ENCODE measurements at regions of chr13 and their contacts with region 1.

Region 1: DNA sequence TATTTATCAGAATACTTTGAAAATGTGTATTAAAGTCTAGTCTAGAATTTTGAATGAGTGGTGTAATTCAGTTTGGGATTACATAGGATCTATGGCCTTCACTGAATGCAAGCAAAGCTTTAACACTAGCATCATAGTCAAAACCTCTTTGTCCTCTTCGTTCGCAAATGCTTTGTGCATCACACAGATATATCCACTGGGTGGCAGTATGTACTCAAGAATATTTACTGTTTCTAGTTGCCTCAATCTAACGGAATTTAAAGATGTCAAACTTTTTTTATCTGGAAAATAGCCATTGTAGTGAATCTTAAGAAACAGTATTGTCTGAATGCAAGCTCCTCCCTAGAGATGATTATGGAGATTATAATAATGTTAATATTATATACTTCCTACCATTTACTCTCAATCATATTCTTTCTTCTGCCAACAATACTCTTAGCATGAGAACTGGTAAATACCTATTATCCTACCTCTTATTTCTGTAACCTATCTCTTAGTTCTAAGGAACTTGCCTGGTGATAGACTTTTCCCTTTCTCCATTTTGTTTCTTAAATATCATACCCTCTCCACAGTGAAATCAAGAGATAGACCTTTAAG is 25.8 kb downstream of the LACC1 start:
- DNase-seq: peak; percentile 35 to 69 (median 57)
- H3K4me3 ChIP-seq: no peak overlapping the region
- H3K4me3 Mint-ChIP-seq: peak overlapping the region in 1 of 2 donors; percentile 21
- H3K27ac ChIP-seq: no peak overlapping the region
- H3K27ac Mint-ChIP-seq: no peak overlapping the region
- H3K4me1 ChIP-seq: no peaks in the 10 kb centered on the region
- H3K4me1 Mint-ChIP-seq: peaks cover 2% of the 10 kb centered on the region
- H3K27me3 ChIP-seq: peaks cover 31 to 40% of the 10 kb centered on the region in 2 donors
- H3K27me3 Mint-ChIP-seq: peaks cover 30 to 37% (median 32%) of the 10 kb centered on the region in 3 donors
- CTCF ChIP-seq: peak; percentile 81

Region 2: DNA sequence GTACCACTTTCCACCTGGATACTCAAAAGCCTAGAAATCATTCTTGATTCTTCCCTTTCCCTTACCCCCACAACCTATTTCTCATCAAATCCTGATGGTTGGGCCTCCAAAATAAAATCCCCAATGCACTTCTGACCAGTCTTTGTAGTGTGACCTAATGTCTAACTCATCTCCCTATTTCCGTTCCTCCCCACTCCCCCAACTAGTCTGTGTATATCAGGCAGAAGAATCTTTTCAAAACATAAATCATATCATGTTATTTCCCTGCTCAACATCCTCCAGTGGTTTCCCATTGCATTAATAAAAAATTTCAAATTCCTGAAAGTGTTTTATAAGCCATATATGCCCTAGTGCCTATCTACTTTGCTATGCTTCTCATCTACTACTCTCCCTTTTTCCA is 43.7 kb before region 1 on chr13:
- intact Hi-C with region 1: no loop called
- DNase-seq: no peak
- H3K4me3 ChIP-seq: no peak overlapping the region
- H3K4me3 Mint-ChIP-seq: no peak overlapping the region
- H3K27ac ChIP-seq: no peak overlapping the region
- H3K27ac Mint-ChIP-seq: no peak overlapping the region
- H3K4me1 ChIP-seq: no peaks in the 10 kb centered on the region
- H3K4me1 Mint-ChIP-seq: peaks cover 5% of the 10 kb centered on the region
- H3K27me3 ChIP-seq: no peaks in the 10 kb centered on the region
- H3K27me3 Mint-ChIP-seq: no peaks in the 10 kb centered on the region
- CTCF ChIP-seq: no peak

Region 3: DNA sequence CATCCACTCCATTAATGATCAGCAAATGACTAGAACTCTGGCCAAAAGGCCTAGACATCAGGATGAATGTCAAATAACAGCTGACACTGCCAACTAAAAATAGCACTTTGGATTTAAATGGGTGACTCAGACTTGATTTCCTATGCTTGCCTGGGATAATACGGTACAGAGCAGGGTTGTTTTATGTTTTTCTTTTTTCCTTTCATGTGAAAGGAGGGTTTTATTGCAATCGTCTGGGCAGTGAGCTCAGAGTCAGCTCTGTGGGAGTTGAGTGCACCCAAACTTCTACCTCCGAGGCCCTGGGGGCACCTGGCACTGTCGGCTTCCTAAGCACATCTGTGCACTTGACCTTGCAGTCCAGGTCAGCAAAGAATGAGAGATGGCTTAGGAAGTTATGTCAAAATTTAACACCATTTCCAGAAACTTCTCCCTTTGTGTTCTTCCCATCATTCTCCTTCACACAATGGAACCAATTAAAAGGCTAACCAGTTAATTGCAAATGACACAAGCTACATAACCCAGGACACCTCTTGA is 108.3 kb after region 1 on chr13:
- intact Hi-C with region 1: no loop called
- DNase-seq: no peak
- H3K4me3 ChIP-seq: no peak overlapping the region
- H3K4me3 Mint-ChIP-seq: no peak overlapping the region
- H3K27ac ChIP-seq: no peak overlapping the region
- H3K27ac Mint-ChIP-seq: no peak overlapping the region
- H3K4me1 ChIP-seq: no peaks in the 10 kb centered on the region
- H3K4me1 Mint-ChIP-seq: peaks cover 12% of the 10 kb centered on the region
- H3K27me3 ChIP-seq: no peaks in the 10 kb centered on the region
- H3K27me3 Mint-ChIP-seq: peaks cover 0 to 4% (median 4%) of the 10 kb centered on the region in 3 donors
- CTCF ChIP-seq: no peak

Region 4: DNA sequence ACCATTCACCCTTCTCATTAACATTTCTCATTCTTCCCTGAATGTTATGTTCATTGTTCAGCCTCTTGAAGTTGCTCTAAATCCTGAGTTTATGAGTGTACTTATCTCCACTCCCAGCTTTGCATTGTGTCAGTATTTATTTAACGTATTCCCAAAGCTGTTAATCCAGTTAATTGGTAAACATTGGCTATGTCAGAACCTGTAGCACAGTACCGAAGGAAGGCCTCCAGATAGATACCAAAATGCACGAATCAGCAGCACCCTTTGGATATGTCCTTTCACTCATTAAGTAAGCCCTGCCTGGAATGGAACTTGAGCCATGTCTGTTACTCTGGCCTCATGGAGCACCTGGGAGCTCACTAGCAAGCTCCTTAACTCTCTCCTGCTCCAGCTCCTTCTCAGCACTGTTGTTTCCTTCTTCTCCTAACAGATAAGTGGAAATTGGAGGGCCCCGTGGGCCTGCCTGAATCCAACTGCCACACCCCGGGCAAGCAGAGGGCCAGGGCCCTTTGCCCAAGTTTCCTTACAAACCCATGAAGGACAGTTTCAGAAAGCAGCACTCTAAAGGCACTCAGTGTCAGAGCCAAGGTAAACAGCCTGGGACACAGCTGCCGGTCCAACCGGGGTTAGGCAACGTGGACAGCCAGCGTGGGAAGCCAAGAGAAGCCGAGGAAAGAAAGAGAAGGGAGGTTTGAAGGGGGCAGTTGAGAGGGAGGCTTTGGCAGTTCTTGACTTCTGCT is 313.1 kb after region 1 on chr13:
- intact Hi-C with region 1: no loop called
- DNase-seq: no peak
- H3K4me3 ChIP-seq: no peak overlapping the region
- H3K4me3 Mint-ChIP-seq: no peak overlapping the region
- H3K27ac ChIP-seq: no peak overlapping the region
- H3K27ac Mint-ChIP-seq: no peak overlapping the region
- H3K4me1 ChIP-seq: no peaks in the 10 kb centered on the region
- H3K4me1 Mint-ChIP-seq: no peaks in the 10 kb centered on the region
- H3K27me3 ChIP-seq: no peaks in the 10 kb centered on the region
- H3K27me3 Mint-ChIP-seq: no peaks in the 10 kb centered on the region
- CTCF ChIP-seq: no peak

Region 5: GRCh38 chr13:44470638-44471562 is 565.4 kb after region 1 on chr13:
- intact Hi-C with region 1: loop called in 1 of 2 experiments (anchors 5 kb)
- DNase-seq: peak in 1 of 3 donors; percentile 24
- H3K4me3 ChIP-seq: no peak overlapping the region
- H3K4me3 Mint-ChIP-seq: no peak overlapping the region
- H3K27ac ChIP-seq: no peak overlapping the region
- H3K27ac Mint-ChIP-seq: no peak overlapping the region
- H3K4me1 ChIP-seq: no peaks in the 10 kb centered on the region
- H3K4me1 Mint-ChIP-seq: no peaks in the 10 kb centered on the region
- H3K27me3 ChIP-seq: no peaks in the 10 kb centered on the region
- H3K27me3 Mint-ChIP-seq: peaks cover 0 to 2% (median 0%) of the 10 kb centered on the region in 3 donors
- CTCF ChIP-seq: peak; percentile 63

Measured in CD14-positive monocyte (primary cell).